HCT116 (cell line): ENCODE measurements at regions of chr2 and their contacts with region 1.

Region 1: DNA sequence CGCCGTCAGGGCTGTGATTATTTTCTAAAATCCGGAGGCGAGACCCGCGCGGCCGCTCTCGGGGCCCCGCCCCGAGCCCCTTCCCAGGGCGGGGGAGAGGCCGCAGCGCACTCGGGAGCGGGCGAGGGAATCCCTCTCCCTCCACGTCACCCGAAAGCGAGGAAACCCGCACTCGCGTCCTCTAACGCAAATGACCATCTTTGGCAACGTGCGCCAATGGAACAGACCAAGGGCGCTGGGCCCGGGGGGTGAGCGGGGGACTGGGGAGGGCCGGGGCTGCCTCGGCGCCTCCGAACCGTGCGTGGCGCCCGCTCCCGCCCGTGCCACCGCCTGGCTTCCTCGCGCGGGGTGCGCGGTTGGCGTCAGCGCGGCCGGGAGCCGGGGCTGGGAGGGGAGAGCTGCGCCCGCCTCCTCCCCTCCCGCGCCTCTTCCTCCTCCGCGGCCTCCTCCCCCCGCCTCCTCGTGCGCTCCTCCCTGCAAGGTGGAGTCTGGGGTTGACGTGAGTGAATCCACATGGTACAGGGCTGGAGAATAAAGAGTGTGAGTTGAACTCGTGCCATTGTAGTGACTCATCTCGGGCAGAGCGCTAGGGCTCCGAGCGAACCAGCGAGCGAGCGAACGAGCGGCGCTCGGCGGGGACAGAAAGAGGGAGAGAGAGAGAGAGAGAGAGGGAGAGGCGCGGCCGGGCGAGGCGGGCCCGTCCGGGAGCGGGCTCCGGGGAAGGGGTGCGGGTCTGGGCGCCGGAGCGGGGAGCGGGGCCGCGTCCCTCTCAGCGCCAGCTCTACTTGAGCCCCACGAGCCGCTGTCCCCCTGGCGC is at the start of gene FOSL2:
- DNase-seq: peak; percentile 99
- ATAC-seq: peak; percentile 74
- H3K4me3 ChIP-seq: peak within 1 kb of the TSS; percentile 70 to 76
- H3K27ac ChIP-seq: peak within 1 kb of the TSS; percentile 93
- H3K4me1 ChIP-seq: peaks cover 45 to 63% of the 10 kb centered on the region in 2 experiments
- H3K27me3 ChIP-seq: no peaks in the 10 kb centered on the region
- CTCF ChIP-seq: no peak
- POLR2A ChIP-seq: peak; percentile 88
- RAD21 ChIP-seq: no peak
- total RNA-seq, gene FOSL2: 44.8 TPM

Region 2: DNA sequence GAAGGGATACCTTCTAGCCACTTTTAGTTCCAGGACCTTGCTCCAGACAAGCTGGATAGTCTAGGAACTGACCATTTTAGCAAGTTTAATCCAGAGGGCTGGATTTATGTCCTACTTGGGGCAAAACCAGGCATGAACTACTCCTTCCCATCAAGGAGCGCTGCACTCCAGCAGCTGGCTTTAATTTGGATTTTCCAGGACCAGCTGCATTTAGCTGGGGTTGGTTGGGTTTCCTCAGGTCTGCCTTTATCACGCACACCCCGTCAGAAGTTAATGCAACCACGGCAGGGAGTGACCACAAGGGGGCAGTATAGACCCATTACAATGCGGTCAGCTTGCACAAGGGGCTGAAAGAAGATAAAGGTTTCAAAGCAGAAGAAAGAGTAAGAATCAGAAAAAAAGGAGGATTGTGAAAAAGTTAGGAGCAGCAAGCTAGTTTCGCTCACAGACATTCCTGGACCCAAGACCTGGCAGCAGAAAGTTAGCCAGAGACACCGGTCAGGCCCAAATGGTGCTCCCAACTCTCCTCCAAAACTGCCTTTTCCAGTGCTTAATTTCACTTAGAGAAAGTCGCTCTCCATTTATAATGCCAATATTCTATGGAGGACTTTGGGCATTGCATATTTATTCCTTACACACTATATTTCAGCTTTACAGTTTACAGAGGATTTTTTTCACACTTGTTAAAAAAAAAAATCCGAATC is 688.7 kb before region 1 on chr2:
- CTCF ChIA-PET with region 1: interaction called, 10 read pairs
- POLR2A ChIA-PET with region 1: no interaction called
- RAD21 ChIA-PET with region 1: interaction called in 1 of 2 experiments, 3 read pairs
- intact Hi-C with region 1: loop called (anchors 2 kb)
- DNase-seq: peak; percentile 71
- ATAC-seq: peak; percentile 73
- H3K4me3 ChIP-seq: no peak overlapping the region
- H3K27ac ChIP-seq: no peak overlapping the region
- H3K4me1 ChIP-seq: peaks cover 17 to 42% of the 10 kb centered on the region in 2 experiments
- H3K27me3 ChIP-seq: no peaks in the 10 kb centered on the region
- CTCF ChIP-seq: peak; percentile 85 to 95 (median 90)
- POLR2A ChIP-seq: no peak
- RAD21 ChIP-seq: peak; percentile 98

Region 3: GRCh38 chr2:27754138-27754588 is 638.3 kb before region 1 on chr2:
- CTCF ChIA-PET with region 1: interaction called, 4 read pairs
- POLR2A ChIA-PET with region 1: no interaction called
- RAD21 ChIA-PET with region 1: no interaction called
- intact Hi-C with region 1: loop called (anchors 1 kb)
- DNase-seq: peak; percentile 56
- ATAC-seq: peak; percentile 95
- H3K4me3 ChIP-seq: no peak overlapping the region; a peak in 1 of 4 replicates
- H3K27ac ChIP-seq: no peak overlapping the region
- H3K4me1 ChIP-seq: peaks cover 12 to 25% of the 10 kb centered on the region in 2 experiments
- H3K27me3 ChIP-seq: no peaks in the 10 kb centered on the region
- CTCF ChIP-seq: peak; percentile 94 to 99 (median 94)
- POLR2A ChIP-seq: no peak
- RAD21 ChIP-seq: peak; percentile 98

Region 4: GRCh38 chr2:27890146-27890923 is 502.2 kb before region 1 on chr2 and contains the starts of genes BABAM2 and RBKS:
- CTCF ChIA-PET with region 1: no interaction called
- POLR2A ChIA-PET with region 1: no interaction called
- RAD21 ChIA-PET with region 1: no interaction called
- intact Hi-C with region 1: loop called (anchors 2 kb)
- DNase-seq: peak; percentile 66
- ATAC-seq: peak; percentile 89
- H3K4me3 ChIP-seq: peak within 1 kb of the TSS; percentile 66 to 78
- H3K27ac ChIP-seq: peak within 1 kb of the TSS; percentile 98
- H3K4me1 ChIP-seq: peaks cover 6 to 28% of the 10 kb centered on the region in 2 experiments; a peak in 3 of 4 replicates
- H3K27me3 ChIP-seq: no peaks in the 10 kb centered on the region
- CTCF ChIP-seq: no peak
- POLR2A ChIP-seq: no peak
- RAD21 ChIP-seq: peak; percentile 23; the same call in 1 of the 2 replicates
- total RNA-seq, gene BABAM2: 23.8 TPM
- total RNA-seq, gene RBKS: 2.4 TPM

Region 5: GRCh38 chr2:28155627-28156026 is 236.9 kb before region 1 on chr2:
- CTCF ChIA-PET with region 1: no interaction called
- POLR2A ChIA-PET with region 1: no interaction called
- RAD21 ChIA-PET with region 1: no interaction called
- intact Hi-C with region 1: loop called (anchors 2 kb)
- DNase-seq: peak; percentile 41
- ATAC-seq: peak; percentile 49; the same call in 1 of the 2 replicates
- H3K4me3 ChIP-seq: no peak overlapping the region
- H3K27ac ChIP-seq: no peak overlapping the region
- H3K4me1 ChIP-seq: peaks cover 1 to 3% of the 10 kb centered on the region in 2 experiments
- H3K27me3 ChIP-seq: no peaks in the 10 kb centered on the region
- CTCF ChIP-seq: peak; percentile 68 to 88 (median 87); a peak in 5 of 6 replicates
- POLR2A ChIP-seq: no peak
- RAD21 ChIP-seq: peak; percentile 72

Region 6: DNA sequence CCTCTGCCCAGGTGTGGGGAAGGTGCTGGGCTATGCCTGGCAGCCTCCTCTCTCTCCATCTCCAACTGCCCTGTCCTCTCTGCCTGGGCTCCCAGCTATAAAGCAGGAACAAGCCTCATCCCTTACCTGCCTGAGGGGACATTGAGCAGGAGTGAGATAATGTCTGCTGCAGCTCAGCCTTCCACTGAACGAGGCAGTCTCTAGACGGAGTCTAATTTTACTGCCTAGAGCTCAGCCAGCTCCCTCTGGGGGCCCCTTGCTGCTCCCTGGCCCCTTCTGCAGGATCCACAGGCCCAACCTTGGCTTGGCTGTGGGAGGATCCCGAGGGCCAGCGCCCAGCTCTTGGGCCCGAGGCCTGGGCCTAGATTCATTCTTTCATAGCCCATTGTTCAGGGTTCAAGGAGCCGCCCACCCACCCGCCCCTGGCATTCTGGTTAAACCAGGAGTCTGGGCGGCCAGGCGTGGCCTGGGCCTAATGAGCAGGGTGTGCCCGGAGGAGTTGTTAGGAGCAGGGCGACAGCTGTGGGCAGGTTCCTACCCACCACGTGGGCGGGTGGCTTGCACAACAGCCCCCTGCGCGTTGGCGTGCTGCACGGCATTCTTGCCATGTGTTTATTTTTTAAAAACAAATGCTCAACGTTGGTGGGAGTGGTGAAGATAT is 44.8 kb after region 1 on chr2:
- CTCF ChIA-PET with region 1: no interaction called
- POLR2A ChIA-PET with region 1: no interaction called
- RAD21 ChIA-PET with region 1: no interaction called
- intact Hi-C with region 1: no loop called
- DNase-seq: no peak
- ATAC-seq: no peak
- H3K4me3 ChIP-seq: no peak overlapping the region
- H3K27ac ChIP-seq: no peak overlapping the region
- H3K4me1 ChIP-seq: peaks cover 0 to 6% of the 10 kb centered on the region in 2 experiments; a peak in 1 of 4 replicates
- H3K27me3 ChIP-seq: no peaks in the 10 kb centered on the region
- CTCF ChIP-seq: no peak
- POLR2A ChIP-seq: no peak
- RAD21 ChIP-seq: no peak